ENCODE measurements at regions of chr6 and their contacts with region 1.

Region 1: GRCh38 chr6:159134701-159135364 is 34.4 kb upstream of the FNDC1 start:
- DNase-seq: peak in 4 of 5 donors; percentile 33 to 62 (median 39)
- H3K4me3 ChIP-seq: no peak overlapping the region
- H3K27ac ChIP-seq: no peak overlapping the region
- H3K4me1 ChIP-seq: peaks cover 4% of the 10 kb centered on the region
- H3K27me3 ChIP-seq: no peaks in the 10 kb centered on the region
- CTCF ChIP-seq: peak in 2 of 3 donors; percentile 49 to 57
- EP300 ChIP-seq: no peak
- POLR2A ChIP-seq: no peak

Region 2: GRCh38 chr6:158803733-158804143 is 331.1 kb before region 1 on chr6:
- intact Hi-C with region 1: loop called in 1 of 4 experiments (anchors 5 kb)
- DNase-seq: no peak
- H3K4me3 ChIP-seq: no peak overlapping the region
- H3K27ac ChIP-seq: no peak overlapping the region
- H3K4me1 ChIP-seq: peaks cover 13% of the 10 kb centered on the region
- H3K27me3 ChIP-seq: no peaks in the 10 kb centered on the region
- CTCF ChIP-seq: no peak
- EP300 ChIP-seq: no peak
- POLR2A ChIP-seq: no peak

Region 3: GRCh38 chr6:159013229-159013628 is 121.6 kb before region 1 on chr6:
- intact Hi-C with region 1: loop called in 1 of 4 experiments (anchors 10 kb)
- DNase-seq: no peak
- H3K4me3 ChIP-seq: no peak overlapping the region
- H3K27ac ChIP-seq: no peak overlapping the region
- H3K4me1 ChIP-seq: peaks cover 1% of the 10 kb centered on the region
- H3K27me3 ChIP-seq: no peaks in the 10 kb centered on the region
- CTCF ChIP-seq: no peak
- EP300 ChIP-seq: no peak
- POLR2A ChIP-seq: no peak

Region 4: DNA sequence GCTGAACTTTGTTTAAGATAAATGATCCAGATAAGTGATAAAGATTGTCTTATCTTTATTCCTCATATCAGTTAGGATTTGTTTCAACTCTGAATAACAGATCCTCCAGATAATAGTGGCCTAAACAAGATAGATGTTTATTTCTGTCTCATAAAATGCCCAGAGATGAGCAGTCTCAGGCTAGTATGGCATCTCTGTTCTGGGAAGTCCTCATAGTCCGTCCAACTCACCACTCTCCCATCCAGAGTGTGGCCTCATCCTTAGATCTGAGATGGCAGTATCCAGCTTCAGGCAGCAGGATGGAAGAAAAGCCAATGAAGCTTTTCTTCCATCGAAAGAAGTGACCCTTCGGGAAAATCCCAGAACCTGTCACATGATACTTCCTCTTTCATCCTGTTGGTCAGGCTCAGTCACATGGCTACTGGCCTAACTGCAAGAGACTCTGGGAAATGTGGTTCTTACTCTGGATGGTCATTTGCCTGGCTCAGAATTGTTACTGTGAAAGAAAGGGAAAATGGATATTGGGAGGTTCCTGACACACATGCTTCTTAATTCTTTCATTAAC is 60.6 kb before region 1 on chr6:
- intact Hi-C with region 1: no loop called
- DNase-seq: no peak
- H3K4me3 ChIP-seq: no peak overlapping the region
- H3K27ac ChIP-seq: no peak overlapping the region
- H3K4me1 ChIP-seq: peaks cover 2% of the 10 kb centered on the region
- H3K27me3 ChIP-seq: no peaks in the 10 kb centered on the region
- CTCF ChIP-seq: no peak
- EP300 ChIP-seq: no peak
- POLR2A ChIP-seq: no peak

Measured in ovary (tissue), 10 donors.